Heart right ventricle (tissue), 16 donors: ENCODE measurements at regions of chr9 and their contacts with region 1.

Region 1: GRCh38 chr9:69199769-69200470 is 25.8 kb downstream of the TJP2 start:
- DNase-seq: no peak
- ATAC-seq: peak in 6 of 8 donors; percentile 31 to 66 (median 46)
- H3K4me3 ChIP-seq: no peak overlapping the region
- H3K27ac ChIP-seq: peak overlapping the region in 1 of 10 donors; percentile 1
- H3K4me1 ChIP-seq: peaks cover 0 to 62% (median 37%) of the 10 kb centered on the region in 9 donors
- H3K27me3 ChIP-seq: no peaks in the 10 kb centered on the region
- CTCF ChIP-seq: peak in 1 of 9 donors; percentile 14

Region 2: GRCh38 chr9:69115621-69116020 is 84.3 kb before region 1 on chr9:
- intact Hi-C with region 1: loop called in 1 of 10 experiments (anchors 10 kb)
- DNase-seq: no peak
- ATAC-seq: no peak
- H3K4me3 ChIP-seq: no peak overlapping the region
- H3K27ac ChIP-seq: no peak overlapping the region
- H3K4me1 ChIP-seq: peaks cover 0 to 3% (median 3%) of the 10 kb centered on the region in 9 donors
- H3K27me3 ChIP-seq: no peaks in the 10 kb centered on the region
- CTCF ChIP-seq: no peak

Region 3: GRCh38 chr9:69421908-69422801 is 222.2 kb after region 1 on chr9:
- intact Hi-C with region 1: no loop called
- DNase-seq: peak in 1 of 2 donors; percentile 67
- ATAC-seq: peak; percentile 63 to 84 (median 76)
- H3K4me3 ChIP-seq: no peak overlapping the region
- H3K27ac ChIP-seq: no peak overlapping the region
- H3K4me1 ChIP-seq: peaks cover 0 to 3% (median 0%) of the 10 kb centered on the region in 9 donors
- H3K27me3 ChIP-seq: peaks cover 0 to 7% (median 0%) of the 10 kb centered on the region in 7 donors
- CTCF ChIP-seq: peak; percentile 67 to 88 (median 80)